Gastrocnemius medialis (tissue), 4 donors: ENCODE measurements at regions of chr9 and their contacts with region 1.

Region 1: DNA sequence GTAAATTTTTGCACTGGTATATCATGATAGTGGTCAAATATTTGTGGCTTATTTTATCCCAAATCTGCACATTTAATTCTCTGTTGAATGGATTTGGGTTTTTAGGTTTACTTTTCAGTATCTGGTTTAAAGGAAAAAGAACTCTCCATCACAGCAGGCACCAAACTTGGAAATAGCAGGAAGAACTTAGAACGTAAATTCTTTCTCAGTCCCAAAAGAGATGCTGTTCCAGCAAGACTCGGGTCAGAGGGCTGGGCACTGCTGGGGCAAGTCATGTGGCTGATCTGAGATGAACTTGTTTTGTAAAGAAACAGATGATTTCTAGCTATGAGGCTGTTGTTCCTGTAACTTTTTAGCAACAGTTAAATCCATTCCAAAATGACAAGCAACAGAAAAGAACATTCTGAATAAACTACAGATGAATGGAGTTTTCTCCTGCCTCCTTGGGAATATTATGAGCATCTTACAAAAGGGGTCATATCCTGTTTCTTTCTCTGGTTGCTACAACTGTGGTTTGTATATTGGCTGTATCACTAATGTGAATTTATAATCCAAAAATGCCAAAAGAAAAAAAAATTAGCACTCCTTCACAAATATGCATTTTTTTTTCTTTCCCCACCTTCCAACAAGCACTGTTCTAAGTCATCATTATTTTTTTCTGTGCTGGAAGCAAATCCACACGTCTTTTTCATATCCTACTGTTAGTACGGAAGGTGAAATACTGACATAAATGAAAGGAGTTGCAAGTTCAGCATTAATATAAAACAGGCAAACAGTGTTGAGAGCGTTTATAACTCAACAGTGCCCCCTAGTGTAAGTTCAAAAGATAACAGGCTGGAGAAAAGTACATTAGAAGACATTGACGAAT is 31.1 kb downstream of the OR2K2 start:
- DNase-seq: peak; percentile 53 to 73
- ATAC-seq: peak; percentile 72 to 77
- H3K4me3 ChIP-seq: no peak overlapping the region
- H3K27ac ChIP-seq: peak overlapping the region in 2 of 4 donors; percentile 21 to 28
- H3K4me1 ChIP-seq: no peaks in the 10 kb centered on the region
- H3K27me3 ChIP-seq: no peaks in the 10 kb centered on the region
- CTCF ChIP-seq: peak; percentile 62 to 80 (median 68)
- POLR2A ChIP-seq: no peak

Region 2: DNA sequence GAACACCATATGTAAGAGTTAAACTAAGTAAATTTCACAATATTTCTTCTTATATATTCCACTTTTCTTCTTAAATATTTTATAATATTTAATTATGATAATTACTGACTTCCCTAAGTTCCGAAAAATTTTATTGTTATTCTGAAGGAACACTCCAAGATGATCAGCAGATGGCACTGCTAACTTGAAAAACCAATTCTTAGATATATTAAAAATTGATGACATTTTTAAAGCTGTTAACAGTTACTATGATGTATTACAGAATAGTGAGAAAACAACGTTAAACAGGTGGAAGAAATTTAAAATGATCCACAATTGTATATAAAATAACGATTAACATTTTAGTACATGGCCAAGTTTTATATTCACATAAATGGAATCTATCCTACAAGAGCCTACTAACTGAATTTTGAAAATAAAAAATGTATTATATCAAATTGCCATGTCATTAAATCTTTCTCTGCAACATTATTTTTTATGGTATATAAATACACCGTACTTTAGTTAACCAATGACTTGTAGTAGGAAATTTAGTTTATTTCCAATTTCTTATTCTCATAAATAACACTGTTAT is 660.5 kb before region 1 on chr9:
- in situ Hi-C with region 1: loop called (anchors 5 to 10 kb)
- intact Hi-C with region 1: loop called (anchors 1 kb)
- DNase-seq: no peak
- ATAC-seq: no peak
- H3K4me3 ChIP-seq: no peak overlapping the region
- H3K27ac ChIP-seq: no peak overlapping the region
- H3K4me1 ChIP-seq: no peaks in the 10 kb centered on the region
- H3K27me3 ChIP-seq: no peaks in the 10 kb centered on the region
- CTCF ChIP-seq: peak in 3 of 5 experiments; percentile 16 to 28 (median 18)
- POLR2A ChIP-seq: no peak

Region 3: GRCh38 chr9:110864021-110864420 is 434.9 kb before region 1 on chr9:
- in situ Hi-C with region 1: no loop called
- intact Hi-C with region 1: no loop called
- DNase-seq: no peak
- ATAC-seq: no peak
- H3K4me3 ChIP-seq: no peak overlapping the region
- H3K27ac ChIP-seq: no peak overlapping the region
- H3K4me1 ChIP-seq: no peaks in the 10 kb centered on the region
- H3K27me3 ChIP-seq: no peaks in the 10 kb centered on the region
- CTCF ChIP-seq: no peak
- POLR2A ChIP-seq: no peak

Region 4: GRCh38 chr9:110954822-110955291 is 344.1 kb before region 1 on chr9:
- in situ Hi-C with region 1: no loop called
- intact Hi-C with region 1: no loop called
- DNase-seq: no peak
- ATAC-seq: no peak
- H3K4me3 ChIP-seq: no peak overlapping the region
- H3K27ac ChIP-seq: no peak overlapping the region
- H3K4me1 ChIP-seq: no peaks in the 10 kb centered on the region
- H3K27me3 ChIP-seq: no peaks in the 10 kb centered on the region
- CTCF ChIP-seq: no peak
- POLR2A ChIP-seq: no peak

Region 5: DNA sequence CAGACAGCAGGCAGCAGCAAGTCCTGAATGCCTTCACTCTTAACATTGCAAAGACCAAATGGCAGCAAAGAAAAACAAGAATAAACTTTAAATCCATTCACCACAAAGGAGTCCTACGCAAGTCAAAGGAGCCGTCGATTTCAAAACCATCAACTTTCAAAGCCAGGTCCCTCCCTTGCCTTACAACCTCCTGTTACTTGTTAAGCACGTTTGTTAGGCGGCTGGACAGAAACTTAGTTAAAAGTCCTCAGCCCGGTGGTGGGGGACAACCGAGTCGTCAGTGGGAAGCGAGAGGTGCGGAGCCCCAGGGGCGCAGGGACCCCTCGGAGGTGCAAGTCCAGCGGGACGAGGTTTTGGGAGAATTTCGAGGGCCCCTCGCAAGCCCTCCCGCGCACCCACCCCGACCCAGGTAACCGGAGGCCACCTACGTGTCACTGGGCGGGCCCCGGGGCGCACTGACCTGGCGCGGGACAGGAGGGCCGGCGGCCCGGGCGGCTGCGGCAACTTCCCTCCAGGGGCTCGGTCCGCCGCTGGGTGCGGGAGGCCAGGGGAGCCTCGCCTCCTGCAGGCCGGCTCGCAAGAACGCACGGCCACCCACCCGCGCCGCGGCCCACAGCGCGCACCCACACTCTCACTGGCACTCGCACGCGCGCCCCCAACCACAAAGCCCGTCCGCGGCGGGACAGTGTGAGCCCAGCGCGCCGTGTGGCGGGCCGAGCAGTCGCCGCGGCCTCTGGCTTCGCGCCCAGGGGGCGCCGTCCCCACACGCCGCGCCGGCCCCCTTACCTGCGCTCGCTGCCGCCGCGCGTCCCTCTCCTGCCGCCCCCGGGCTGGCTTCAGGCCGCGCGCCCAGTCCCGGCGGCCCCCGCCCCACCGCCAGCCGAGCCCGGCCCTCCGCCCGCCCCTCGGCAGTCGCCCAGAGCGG is 261.3 kb before region 1 on chr9:
- in situ Hi-C with region 1: no loop called
- intact Hi-C with region 1: loop called (anchors 5 kb)
- DNase-seq: no peak
- ATAC-seq: peak; percentile 12 to 15
- H3K4me3 ChIP-seq: peak overlapping the region; percentile 52 to 57 (median 54)
- H3K27ac ChIP-seq: peak overlapping the region; percentile 57 to 73 (median 69)
- H3K4me1 ChIP-seq: no peaks in the 10 kb centered on the region
- H3K27me3 ChIP-seq: peaks cover 21 to 35% (median 34%) of the 10 kb centered on the region in 3 donors
- CTCF ChIP-seq: no peak
- POLR2A ChIP-seq: peak in 1 of 2 donors; percentile 13

Region 6: DNA sequence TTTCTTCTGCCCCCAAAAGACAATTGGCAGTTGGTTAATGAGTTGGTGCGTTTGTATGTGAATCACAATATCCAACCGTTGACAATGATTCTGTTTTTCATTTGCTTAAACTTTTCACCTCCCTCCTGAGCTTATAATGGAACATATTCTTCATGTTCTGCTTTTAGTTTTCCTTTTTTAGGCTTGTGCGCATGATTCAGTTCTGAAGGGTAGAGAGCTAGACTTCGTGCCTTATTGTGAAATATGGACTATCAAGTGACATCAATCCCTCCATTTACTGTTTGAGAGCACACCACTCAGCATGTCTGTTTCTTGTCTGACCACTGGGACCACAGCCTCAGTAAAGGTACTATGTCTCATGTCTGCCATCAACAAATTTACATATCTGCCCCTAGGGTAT is 230.2 kb before region 1 on chr9:
- in situ Hi-C with region 1: loop called in 2 of 4 experiments (anchors 25 kb)
- intact Hi-C with region 1: no loop called
- DNase-seq: no peak
- ATAC-seq: peak; percentile 69 to 77
- H3K4me3 ChIP-seq: no peak overlapping the region
- H3K27ac ChIP-seq: peak overlapping the region; percentile 45 to 75 (median 64)
- H3K4me1 ChIP-seq: no peaks in the 10 kb centered on the region
- H3K27me3 ChIP-seq: no peaks in the 10 kb centered on the region
- CTCF ChIP-seq: no peak
- POLR2A ChIP-seq: no peak

Region 7: DNA sequence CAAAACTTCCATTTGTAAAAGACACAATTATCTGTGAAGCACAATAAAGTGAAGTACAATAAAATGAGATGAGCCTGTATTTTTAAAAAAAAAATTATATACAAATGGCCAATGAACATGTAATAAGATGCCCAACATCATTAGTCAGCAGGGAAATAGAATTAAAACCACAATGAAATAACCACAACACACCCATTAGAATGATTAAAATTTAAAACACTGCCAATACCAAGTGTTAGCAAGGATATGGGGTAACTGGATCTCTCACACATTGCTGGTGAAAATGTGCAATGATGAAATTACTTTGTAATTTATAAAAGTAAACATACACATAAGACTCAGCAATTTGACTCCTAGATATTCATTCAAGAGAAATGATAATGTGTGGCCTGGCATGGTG is 433.0 kb after region 1 on chr9:
- in situ Hi-C with region 1: no loop called
- intact Hi-C with region 1: no loop called
- DNase-seq: no peak
- ATAC-seq: no peak
- H3K4me3 ChIP-seq: no peak overlapping the region
- H3K27ac ChIP-seq: no peak overlapping the region
- H3K4me1 ChIP-seq: no peaks in the 10 kb centered on the region
- H3K27me3 ChIP-seq: no peaks in the 10 kb centered on the region
- CTCF ChIP-seq: no peak
- POLR2A ChIP-seq: no peak